HEK293 (cell line): ENCODE measurements at regions of chr1 and their contacts with region 1.

Region 1: DNA sequence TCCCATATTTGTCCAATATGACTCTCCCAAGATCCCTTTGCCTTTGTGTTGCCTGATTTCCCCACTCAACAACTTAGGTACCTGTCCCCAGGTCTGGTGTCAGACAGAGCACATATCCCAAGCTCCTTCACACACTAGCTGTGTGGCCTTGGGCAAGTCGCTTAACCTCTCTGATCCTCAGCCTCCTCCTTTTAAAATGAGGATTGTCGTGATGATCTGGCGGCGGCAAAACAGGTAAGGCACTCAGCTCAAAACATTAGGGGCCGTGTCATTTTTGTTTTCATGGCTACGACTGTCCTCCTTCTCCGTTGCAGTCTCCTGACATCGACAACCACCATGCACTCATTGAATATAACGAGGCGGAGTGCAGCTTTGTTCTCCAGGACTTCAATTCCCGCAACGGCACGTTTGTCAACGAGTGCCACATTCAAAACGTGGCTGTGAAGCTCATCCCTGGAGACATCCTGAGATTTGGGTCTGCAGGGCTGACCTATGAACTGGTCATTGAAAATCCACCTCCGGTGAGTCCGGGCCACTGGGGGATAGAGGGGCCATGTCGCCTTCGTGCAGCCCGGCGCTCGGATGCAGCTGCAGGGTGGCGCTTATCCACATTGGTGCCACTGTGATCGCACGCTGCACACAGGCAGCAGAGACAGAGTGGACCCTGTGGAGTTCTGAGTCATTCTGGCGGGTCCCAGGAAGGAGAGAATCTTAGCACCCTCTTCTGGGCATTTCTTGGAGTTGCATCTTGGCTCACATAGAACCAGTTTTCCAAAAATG is 25.2 kb downstream of the FHAD1 start:
- H3K4me3 ChIP-seq: no peak overlapping the region
- H3K27ac ChIP-seq: no peak overlapping the region
- H3K4me1 ChIP-seq: no peaks in the 10 kb centered on the region
- CTCF ChIP-seq: peak; percentile 79; the same call in 1 of the 2 replicates

Region 2: GRCh38 chr1:15146971-15147376 is 125.2 kb before region 1 on chr1:
- CTCF ChIA-PET with region 1: interaction called, 59 read pairs
- POLR2A ChIA-PET with region 1: interaction called, 3 read pairs
- H3K4me3 ChIP-seq: no peak overlapping the region
- H3K27ac ChIP-seq: no peak overlapping the region
- H3K4me1 ChIP-seq: no peaks in the 10 kb centered on the region
- CTCF ChIP-seq: no peak

Region 3: DNA sequence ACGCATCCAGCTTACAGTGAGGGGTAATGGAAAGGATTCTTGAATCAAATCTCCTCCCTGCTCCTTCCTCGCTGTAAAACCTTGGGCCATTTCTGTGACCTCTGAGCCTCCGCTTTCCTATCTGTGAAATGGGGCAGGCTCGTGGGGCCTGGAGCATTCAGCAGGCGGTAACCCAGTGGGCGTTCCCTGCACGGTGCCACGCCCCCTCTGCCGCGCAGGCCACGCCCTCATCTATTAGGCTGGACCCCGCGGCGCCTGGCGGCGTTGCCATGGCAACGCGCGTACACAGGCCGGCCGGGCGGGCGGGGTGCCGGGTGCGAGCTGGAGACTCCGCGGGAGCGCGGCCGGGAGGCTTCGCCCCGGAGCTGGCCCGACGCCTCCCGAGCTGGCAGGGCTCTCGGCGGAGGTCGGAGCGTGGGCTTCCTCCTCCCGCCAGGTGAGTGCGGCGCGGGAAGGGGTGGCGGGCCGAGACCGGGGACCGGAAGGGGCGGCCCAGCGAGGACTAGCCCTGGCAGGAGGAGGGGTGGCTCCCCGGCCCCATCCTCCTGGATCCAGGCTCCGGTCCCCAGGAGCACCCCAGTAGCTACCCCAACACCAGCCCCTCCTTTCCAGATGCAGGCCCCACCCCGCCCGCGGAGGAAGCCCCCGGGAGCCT is 25.1 kb before region 1 on chr1 and contains the start of gene FHAD1:
- CTCF ChIA-PET with region 1: interaction called, 10 read pairs
- POLR2A ChIA-PET with region 1: no interaction called
- H3K4me3 ChIP-seq: peak within 1 kb of the TSS; percentile 38
- H3K27ac ChIP-seq: no peak within 1 kb of the TSS
- H3K4me1 ChIP-seq: no peaks in the 10 kb centered on the region
- CTCF ChIP-seq: no peak

Region 4: GRCh38 chr1:15282810-15283474 is 10.7 kb after region 1 on chr1:
- CTCF ChIA-PET with region 1: interaction called, 13 read pairs
- POLR2A ChIA-PET with region 1: no interaction called
- H3K4me3 ChIP-seq: no peak overlapping the region
- H3K27ac ChIP-seq: no peak overlapping the region
- H3K4me1 ChIP-seq: 0 out of 2 replicates have a peak, but pooled peaks cover 6% of the 10 kb centered on the region
- CTCF ChIP-seq: no peak